CD8-positive, alpha-beta T cell (primary cell): ENCODE measurements at regions of chr10 and their contacts with region 1.

Region 1: DNA sequence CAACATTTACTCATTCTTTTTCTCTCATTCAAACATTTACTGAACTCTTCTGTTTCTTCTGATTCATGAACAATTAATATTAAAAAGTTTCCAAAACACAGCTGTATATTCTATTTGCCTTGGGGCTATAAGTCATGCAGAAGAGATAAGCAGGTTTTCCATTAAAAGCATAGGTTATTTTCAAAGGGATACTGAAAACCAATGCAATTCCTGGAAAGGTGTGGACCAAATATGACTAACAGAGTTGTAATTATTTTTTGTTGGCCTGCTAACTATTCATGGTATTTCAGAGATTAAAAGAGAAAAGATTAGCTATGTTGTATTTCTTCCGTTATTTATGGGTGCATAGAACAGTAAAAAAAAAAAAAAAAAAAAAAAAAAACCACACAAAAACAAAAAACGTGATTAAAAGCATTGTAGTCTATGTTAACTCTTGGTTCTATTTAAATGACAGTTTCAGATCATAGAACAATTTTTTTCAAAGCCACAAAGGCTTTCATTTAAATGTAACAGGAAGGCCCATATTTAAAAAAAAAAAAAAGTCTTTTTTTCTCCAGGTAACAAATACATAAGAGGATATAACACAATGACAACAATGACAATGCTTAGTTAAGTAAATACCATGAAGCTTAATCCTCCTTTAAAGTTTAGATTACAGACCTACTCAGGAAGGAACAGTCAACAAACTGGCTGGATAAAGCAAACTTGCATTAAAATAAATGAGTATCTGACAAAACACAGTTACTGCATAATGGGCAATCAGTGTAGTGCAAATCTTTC is 1042.9 kb downstream of the GATA3 start:
- DNase-seq: peak in 2 of 9 experiments; percentile 32 to 68
- ATAC-seq: peak; percentile 69
- H3K4me3 ChIP-seq: no peak overlapping the region
- H3K4me3 Mint-ChIP-seq: no peak overlapping the region
- H3K27ac ChIP-seq: peak overlapping the region in 1 of 2 experiments; percentile 37
- H3K27ac Mint-ChIP-seq: peak overlapping the region; percentile 33
- H3K4me1 ChIP-seq: peaks cover 28% of the 10 kb centered on the region
- H3K4me1 Mint-ChIP-seq: peaks cover 33% of the 10 kb centered on the region
- H3K27me3 ChIP-seq: no peaks in the 10 kb centered on the region
- H3K27me3 Mint-ChIP-seq: no peaks in the 10 kb centered on the region
- CTCF ChIP-seq: no peak

Region 2: GRCh38 chr10:9010093-9010492 is 87.3 kb before region 1 on chr10:
- CTCF ChIA-PET with region 1: interaction called, 4 read pairs
- POLR2A ChIA-PET with region 1: interaction called, 9 read pairs
- intact Hi-C with region 1: loop called (anchors 2 to 5 kb)
- DNase-seq: peak in 8 of 9 experiments; percentile 28 to 83 (median 59)
- ATAC-seq: peak; percentile 84
- H3K4me3 ChIP-seq: no peak overlapping the region
- H3K4me3 Mint-ChIP-seq: peak overlapping the region; percentile 45
- H3K27ac ChIP-seq: no peak overlapping the region
- H3K27ac Mint-ChIP-seq: peak overlapping the region; percentile 58
- H3K4me1 ChIP-seq: peaks cover 29% of the 10 kb centered on the region
- H3K4me1 Mint-ChIP-seq: peaks cover 46% of the 10 kb centered on the region
- H3K27me3 ChIP-seq: no peaks in the 10 kb centered on the region
- H3K27me3 Mint-ChIP-seq: no peaks in the 10 kb centered on the region
- CTCF ChIP-seq: no peak

Region 3: GRCh38 chr10:9158675-9159074 is 61.3 kb after region 1 on chr10:
- CTCF ChIA-PET with region 1: no interaction called
- POLR2A ChIA-PET with region 1: no interaction called
- intact Hi-C with region 1: loop called in 1 of 2 experiments (anchors 5 kb)
- DNase-seq: no peak
- ATAC-seq: no peak
- H3K4me3 ChIP-seq: no peak overlapping the region
- H3K4me3 Mint-ChIP-seq: no peak overlapping the region
- H3K27ac ChIP-seq: no peak overlapping the region
- H3K27ac Mint-ChIP-seq: no peak overlapping the region
- H3K4me1 ChIP-seq: no peaks in the 10 kb centered on the region
- H3K4me1 Mint-ChIP-seq: peaks cover 3% of the 10 kb centered on the region
- H3K27me3 ChIP-seq: peaks cover 0 to 2% of the 10 kb centered on the region in 2 experiments
- H3K27me3 Mint-ChIP-seq: no peaks in the 10 kb centered on the region
- CTCF ChIP-seq: no peak

Region 4: GRCh38 chr10:9379183-9379582 is 281.8 kb after region 1 on chr10:
- CTCF ChIA-PET with region 1: no interaction called
- POLR2A ChIA-PET with region 1: no interaction called
- intact Hi-C with region 1: no loop called
- DNase-seq: no peak
- ATAC-seq: no peak
- H3K4me3 ChIP-seq: no peak overlapping the region
- H3K4me3 Mint-ChIP-seq: no peak overlapping the region
- H3K27ac ChIP-seq: no peak overlapping the region
- H3K27ac Mint-ChIP-seq: no peak overlapping the region
- H3K4me1 ChIP-seq: no peaks in the 10 kb centered on the region
- H3K4me1 Mint-ChIP-seq: no peaks in the 10 kb centered on the region
- H3K27me3 ChIP-seq: no peaks in the 10 kb centered on the region
- H3K27me3 Mint-ChIP-seq: peaks cover 11% of the 10 kb centered on the region
- CTCF ChIP-seq: no peak